Heart left ventricle (tissue), 16 donors: ENCODE measurements at regions of chr3 and their contacts with region 1.

Region 1: GRCh38 chr3:56339671-56340070 is 128.6 kb downstream of the ERC2 start:
- DNase-seq: no peak
- ATAC-seq: no peak
- H3K4me3 ChIP-seq: no peak overlapping the region
- H3K27ac ChIP-seq: no peak overlapping the region
- H3K4me1 ChIP-seq: no peaks in the 10 kb centered on the region
- H3K27me3 ChIP-seq: peaks cover 0 to 17% (median 0%) of the 10 kb centered on the region in 9 donors
- CTCF ChIP-seq: no peak
- POLR2A ChIP-seq: no peak

Region 2: DNA sequence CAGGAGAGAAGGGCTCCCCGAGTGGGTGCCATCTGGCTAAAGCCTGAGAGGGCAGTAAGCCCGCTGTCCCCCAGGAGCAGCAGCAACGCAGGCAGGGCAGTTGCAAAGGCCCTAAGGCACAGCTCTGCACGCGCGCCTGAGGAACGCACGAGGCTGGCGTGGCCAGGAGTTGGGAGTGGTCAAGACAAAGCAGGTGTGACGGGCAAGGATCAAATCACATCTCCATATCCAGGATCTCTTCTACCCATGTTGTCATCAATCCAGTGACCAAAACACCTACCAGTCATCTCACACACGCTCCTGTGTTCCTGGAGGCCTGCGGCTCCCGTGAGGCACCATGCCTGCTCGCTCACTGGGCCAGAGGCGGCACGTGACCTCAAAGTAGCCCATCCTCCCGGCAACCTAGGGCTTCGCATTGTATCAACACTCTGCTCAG is 69.1 kb after region 1 on chr3:
- intact Hi-C with region 1: no loop called
- DNase-seq: no peak
- ATAC-seq: no peak
- H3K4me3 ChIP-seq: no peak overlapping the region
- H3K27ac ChIP-seq: no peak overlapping the region
- H3K4me1 ChIP-seq: no peaks in the 10 kb centered on the region
- H3K27me3 ChIP-seq: no peaks in the 10 kb centered on the region
- CTCF ChIP-seq: no peak
- POLR2A ChIP-seq: no peak

Region 3: DNA sequence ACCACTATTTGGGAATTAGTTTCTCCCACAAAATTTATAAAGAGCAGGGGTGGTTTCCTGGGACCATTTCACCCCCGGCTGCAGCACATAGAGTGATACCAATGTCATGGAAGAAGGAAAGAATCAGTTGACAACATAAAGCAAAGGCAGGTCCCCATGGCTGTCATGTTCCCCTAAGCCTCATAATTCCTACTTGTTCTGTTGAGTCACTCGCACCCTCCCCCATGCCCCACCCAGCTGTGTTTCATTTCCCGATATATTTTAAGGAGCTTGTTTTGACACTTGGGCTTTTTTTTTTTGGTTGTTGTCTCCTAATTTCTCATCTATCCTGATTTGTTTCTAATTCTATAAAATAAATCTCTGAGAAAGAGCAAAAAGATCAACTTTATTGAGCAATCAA is 103.7 kb after region 1 on chr3:
- intact Hi-C with region 1: loop called in 3 of 10 experiments (anchors 2 to 10 kb)
- DNase-seq: no peak
- ATAC-seq: no peak
- H3K4me3 ChIP-seq: no peak overlapping the region
- H3K27ac ChIP-seq: no peak overlapping the region
- H3K4me1 ChIP-seq: no peaks in the 10 kb centered on the region
- H3K27me3 ChIP-seq: peaks cover 0 to 5% (median 0%) of the 10 kb centered on the region in 9 donors
- CTCF ChIP-seq: no peak
- POLR2A ChIP-seq: no peak

Region 4: GRCh38 chr3:56494686-56495322 is 155.1 kb after region 1 on chr3:
- intact Hi-C with region 1: loop called in 6 of 10 experiments (anchors 2 to 5 kb)
- DNase-seq: peak; percentile 71 to 81 (median 76)
- ATAC-seq: peak; percentile 82 to 90 (median 86)
- H3K4me3 ChIP-seq: no peak overlapping the region
- H3K27ac ChIP-seq: no peak overlapping the region
- H3K4me1 ChIP-seq: no peaks in the 10 kb centered on the region
- H3K27me3 ChIP-seq: peaks cover 0 to 11% (median 0%) of the 10 kb centered on the region in 9 donors
- CTCF ChIP-seq: peak; percentile 83 to 95 (median 91)
- POLR2A ChIP-seq: no peak